ENCODE measurements at regions of chr17 and their contacts with region 1.

Region 1: DNA sequence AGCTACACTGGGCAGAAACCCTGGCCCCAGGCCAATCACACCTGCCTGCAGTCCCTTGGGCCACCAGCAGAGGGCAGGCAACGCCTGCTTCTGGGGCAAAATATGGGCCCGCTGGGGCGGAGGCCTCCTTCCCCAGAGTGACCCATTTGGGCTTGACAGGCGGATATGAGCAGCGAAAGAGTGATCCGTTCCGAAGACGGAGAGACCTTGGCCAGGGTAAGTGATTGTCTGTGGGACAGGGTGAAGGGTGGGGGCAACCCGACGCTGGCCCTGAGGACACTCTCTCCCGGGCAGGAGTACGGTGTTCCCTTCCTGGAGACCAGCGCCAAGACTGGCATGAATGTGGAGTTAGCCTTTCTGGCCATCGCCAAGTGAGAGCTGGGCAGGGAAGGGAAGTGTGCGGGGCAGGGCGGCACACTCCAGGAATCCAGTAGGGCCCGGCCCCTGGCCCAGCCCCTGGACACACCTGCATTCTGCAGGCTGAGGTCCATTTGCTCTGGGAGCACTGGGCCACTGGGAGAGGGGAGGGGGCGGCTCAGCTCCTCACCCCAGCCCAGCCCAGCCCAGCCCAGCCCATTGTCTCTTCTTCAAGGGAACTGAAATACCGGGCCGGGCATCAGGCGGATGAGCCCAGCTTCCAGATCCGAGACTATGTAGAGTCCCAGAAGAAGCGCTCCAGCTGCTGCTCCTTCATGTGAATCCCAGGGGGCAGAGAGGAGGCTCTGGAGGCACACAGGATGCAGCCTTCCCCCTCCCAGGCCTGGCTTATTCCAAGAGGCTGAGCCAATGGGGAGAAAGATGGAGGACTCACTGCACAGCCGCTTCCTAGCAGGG is 3.5 kb upstream of the NHERF1 start:
- DNase-seq: peak; percentile 66 to 99 (median 86)

Region 2: DNA sequence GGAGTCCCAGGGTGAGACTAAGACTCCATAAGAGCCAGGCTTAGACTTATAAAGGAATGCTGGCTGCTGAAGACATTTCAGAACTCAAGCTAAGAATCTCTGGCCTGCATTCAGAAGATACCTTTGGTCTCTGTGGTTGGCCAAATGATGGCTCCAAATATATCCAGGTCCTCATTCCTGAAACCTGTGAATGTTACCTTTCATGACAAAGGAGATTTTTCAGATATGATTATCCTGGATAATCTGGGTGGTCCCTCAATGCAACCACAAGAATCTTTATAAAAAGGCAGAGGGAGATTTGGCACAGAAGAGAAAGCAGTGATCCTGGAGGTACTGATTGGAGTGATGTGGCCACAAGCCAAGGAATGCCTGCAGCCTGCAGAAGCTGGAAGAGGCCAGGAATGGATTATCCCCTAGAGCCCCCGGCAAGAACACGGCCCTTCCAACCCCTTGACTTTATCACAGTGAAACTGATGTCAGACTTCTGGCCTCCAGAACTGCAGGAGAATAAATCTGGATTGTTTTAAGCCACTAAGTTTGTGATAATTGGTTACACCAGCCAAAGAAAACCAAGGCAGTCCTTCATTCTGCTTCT is 1905.7 kb before region 1 on chr17:
- intact Hi-C with region 1: no loop called
- DNase-seq: no peak

Region 3: DNA sequence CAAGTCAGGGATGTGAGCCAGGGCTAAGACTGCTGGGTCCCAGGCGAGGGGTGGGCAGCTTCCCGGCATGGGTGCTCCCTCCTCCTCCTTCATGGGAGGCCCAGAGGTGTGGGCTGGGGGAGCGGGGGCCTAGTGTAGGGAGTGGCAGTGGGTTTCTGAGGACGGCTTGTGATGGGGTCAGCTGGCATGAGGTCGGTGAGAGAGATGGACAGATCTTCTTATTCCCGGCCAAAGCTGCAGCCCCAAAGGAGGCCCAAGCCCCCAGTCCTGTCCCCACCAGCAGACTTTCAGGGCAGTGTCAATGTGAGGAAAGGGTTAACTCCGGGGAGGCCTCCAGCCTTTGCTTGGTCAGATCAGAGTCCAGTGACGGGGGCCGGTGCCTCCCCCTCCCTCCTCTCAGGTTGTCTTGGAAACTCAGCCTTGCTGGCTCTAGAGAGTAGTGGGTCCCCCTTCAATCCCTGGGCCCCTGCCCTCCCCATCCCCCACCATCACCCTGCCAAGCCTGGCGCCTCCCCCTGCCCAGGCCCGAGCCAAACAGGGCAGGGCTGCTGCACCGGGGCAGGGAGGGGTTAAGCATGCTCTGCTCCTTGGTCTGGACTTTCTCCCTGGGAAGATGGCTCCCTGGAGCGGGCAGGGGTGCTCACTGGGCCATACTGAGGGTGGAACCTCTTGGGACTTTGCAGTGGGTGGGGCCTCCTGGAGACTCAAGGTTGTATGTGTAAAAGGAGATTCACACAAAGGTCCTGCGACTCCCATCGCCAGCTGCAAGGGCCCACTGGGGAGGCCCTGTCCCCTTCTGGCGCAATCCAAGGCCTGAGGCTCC is 18.8 kb after region 1 on chr17:
- intact Hi-C with region 1: loop called (anchors 2 kb)
- DNase-seq: peak in 2 of 10 donors; percentile 33 to 84

Region 4: GRCh38 chr17:74770498-74771318 is 25.8 kb after region 1 on chr17:
- intact Hi-C with region 1: loop called (anchors 1 kb)
- DNase-seq: peak; percentile 51 to 94 (median 68)

Region 5: DNA sequence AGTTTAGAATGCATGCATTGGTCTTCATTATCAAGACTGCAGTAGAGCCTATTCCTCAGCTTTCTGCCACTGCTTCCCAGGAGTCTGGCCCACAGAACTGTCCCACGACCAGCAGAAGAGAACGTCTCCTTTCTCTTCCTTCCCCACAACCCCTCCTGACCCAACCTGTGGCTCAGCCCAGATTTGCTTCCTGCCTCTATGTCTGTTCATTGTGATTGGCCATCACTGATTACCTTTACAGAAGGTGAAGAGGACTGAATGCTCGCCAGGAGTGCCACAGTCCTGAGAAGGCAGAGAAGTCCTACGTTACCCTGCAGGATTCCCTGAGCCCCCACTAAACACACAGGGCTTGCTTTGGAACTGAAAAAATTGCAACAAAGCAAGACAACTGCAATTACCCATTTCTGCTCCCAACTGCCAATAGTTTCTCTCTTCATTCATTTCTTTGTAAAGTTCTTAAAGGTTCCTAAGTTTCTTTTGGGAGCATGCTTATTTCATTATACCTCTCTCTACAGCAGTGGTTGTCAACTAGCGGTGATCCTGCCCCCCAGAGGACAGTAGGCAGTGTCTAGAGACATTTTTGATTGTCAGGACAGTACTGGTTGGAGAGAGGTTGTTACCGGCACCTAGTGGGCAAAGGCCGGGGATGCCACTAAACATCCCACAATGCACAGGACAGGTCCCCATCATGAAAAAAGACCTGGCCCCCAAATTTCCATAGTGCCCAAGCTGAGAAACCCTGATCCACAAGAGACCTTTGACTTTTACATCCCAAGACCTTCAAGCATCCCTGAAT is 35.7 kb after region 1 on chr17:
- intact Hi-C with region 1: loop called (anchors 1 kb)
- DNase-seq: peak in 3 of 10 donors; percentile 40 to 90 (median 64)

Region 6: GRCh38 chr17:74864866-74865395 is 120.0 kb after region 1 on chr17:
- intact Hi-C with region 1: loop called (anchors 2 kb)
- DNase-seq: peak; percentile 73 to 98 (median 88)

Region 7: DNA sequence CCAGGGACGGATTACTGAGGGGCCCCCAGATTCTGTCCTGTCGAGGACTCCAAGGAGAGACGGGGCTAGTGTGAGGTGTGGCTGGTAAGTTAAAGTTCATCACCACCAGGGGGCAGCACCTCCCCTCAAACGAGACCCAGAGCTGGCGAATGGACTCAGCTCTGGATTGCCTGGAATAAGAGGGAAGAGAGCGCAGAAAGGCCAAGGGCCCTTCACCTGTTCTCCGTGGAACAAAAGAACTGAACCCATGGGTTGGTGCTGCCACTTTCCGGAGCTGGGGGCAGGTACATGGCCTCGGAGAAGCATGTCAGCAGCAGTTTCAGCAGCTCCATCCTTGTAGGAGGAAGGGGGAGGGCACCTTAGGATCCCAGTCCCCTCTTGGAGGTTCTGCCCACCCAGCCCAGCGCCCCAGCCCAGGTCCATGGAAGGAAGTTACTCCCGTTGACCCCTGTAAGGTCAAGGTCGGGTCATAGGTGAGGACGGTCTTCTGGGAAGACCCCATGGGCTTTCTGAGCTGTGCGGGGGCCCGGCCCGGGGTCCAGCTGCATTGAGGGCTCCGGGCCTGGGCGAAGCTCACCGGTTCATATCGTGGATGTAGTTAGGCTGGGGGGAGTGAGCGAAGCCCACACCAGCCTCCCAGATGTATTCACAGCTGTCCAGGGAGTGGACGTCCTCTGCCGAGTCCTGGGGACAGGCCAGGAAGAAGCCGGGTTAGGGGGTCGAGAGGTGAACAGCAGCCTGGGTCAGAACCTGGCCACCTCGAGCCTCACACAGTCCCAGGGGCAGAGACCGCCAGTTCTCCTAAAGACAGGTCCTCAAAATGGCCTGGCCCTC is 216.9 kb after region 1 on chr17:
- intact Hi-C with region 1: no loop called
- DNase-seq: peak; percentile 78 to 98 (median 90)

Measured in posterior cingulate gyrus (tissue), 11 donors.